ENCODE measurements at regions of chrX and their contacts with region 1.

Region 1: GRCh38 chrX:20442597-20442996 is 175.9 kb upstream of the RPS6KA3 start:
- DNase-seq: peak; percentile 76
- ATAC-seq: peak; percentile 88
- H3K4me3 ChIP-seq: no peak overlapping the region
- H3K27ac ChIP-seq: peak overlapping the region; percentile 46
- H3K4me1 ChIP-seq: peaks cover 63% of the 10 kb centered on the region
- H3K27me3 ChIP-seq: no peaks in the 10 kb centered on the region
- CTCF ChIP-seq: peak; percentile 72
- EP300 ChIP-seq: peak in 1 of 2 experiments; percentile 61; a peak in 2 of 4 replicates
- POLR2A ChIP-seq: no peak
- RAD21 ChIP-seq: peak; percentile 83

Region 2: GRCh38 chrX:20116579-20117240 is 325.9 kb before region 1 on chrX and contains the start of gene MAP7D2:
- CTCF ChIA-PET with region 1: no interaction called
- POLR2A ChIA-PET with region 1: no interaction called
- in situ Hi-C with region 1: no loop called
- intact Hi-C with region 1: no loop called
- DNase-seq: peak; percentile 2
- ATAC-seq: peak; percentile 78
- H3K4me3 ChIP-seq: peak within 1 kb of the TSS; percentile 50 to 71 (median 64); a peak in 5 of 6 replicates
- H3K27ac ChIP-seq: no peak within 1 kb of the TSS
- H3K4me1 ChIP-seq: peaks cover 35% of the 10 kb centered on the region
- H3K27me3 ChIP-seq: no peaks in the 10 kb centered on the region
- CTCF ChIP-seq: no peak
- EP300 ChIP-seq: no peak
- POLR2A ChIP-seq: no peak
- RAD21 ChIP-seq: no peak
- total RNA-seq, gene MAP7D2: 10.5 and 14.2 TPM in 2 replicates

Region 3: GRCh38 chrX:20300822-20301221 is 141.8 kb before region 1 on chrX:
- CTCF ChIA-PET with region 1: no interaction called
- POLR2A ChIA-PET with region 1: no interaction called
- in situ Hi-C with region 1: no loop called
- intact Hi-C with region 1: no loop called
- DNase-seq: no peak
- ATAC-seq: peak; percentile 65
- H3K4me3 ChIP-seq: no peak overlapping the region
- H3K27ac ChIP-seq: no peak overlapping the region
- H3K4me1 ChIP-seq: peaks cover 4% of the 10 kb centered on the region
- H3K27me3 ChIP-seq: no peaks in the 10 kb centered on the region
- CTCF ChIP-seq: no peak
- EP300 ChIP-seq: no peak
- POLR2A ChIP-seq: no peak
- RAD21 ChIP-seq: no peak

Region 4: DNA sequence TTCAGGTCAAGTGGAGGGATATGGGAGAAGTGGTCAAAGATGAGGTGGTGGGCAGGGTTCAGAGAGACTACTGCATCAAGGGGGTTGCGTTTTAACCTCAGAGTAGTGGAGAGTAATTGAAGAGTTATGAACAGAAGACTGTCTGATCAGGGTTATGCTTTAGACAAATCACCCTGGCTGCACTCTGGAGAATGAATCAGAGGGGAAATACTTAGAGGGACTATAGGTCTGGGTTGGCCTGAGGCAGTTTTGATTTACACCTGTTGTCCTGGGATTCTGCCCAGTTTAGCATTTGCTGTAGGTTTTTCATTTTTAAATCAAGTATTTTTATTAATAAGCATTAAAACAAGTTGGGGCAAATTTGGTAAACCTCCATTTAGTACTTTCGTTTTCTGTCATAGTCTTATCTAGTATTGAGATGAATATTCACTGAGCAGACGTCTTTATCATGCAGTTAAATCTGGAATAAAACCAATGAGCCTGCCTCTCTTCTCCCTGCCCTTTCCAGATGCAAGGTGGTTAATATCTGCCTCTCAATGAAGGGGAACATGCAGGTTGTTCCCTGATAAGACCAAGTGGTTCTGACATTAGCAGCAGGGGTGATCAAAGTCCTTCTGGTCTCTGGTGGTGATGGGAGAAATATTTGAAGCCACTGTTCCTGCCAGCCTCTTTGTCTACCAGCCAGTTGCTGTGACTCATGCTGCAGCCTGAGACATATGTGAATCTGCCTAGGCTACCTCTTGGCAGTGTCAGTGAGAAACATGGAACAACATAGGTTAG is 59.9 kb before region 1 on chrX:
- CTCF ChIA-PET with region 1: no interaction called
- POLR2A ChIA-PET with region 1: no interaction called
- in situ Hi-C with region 1: no loop called
- intact Hi-C with region 1: loop called (anchors 5 kb)
- DNase-seq: peak; percentile 84
- ATAC-seq: peak; percentile 92
- H3K4me3 ChIP-seq: peak overlapping the region in 2 of 3 experiments; percentile 19 to 31; a peak in 2 of 6 replicates
- H3K27ac ChIP-seq: peak overlapping the region; percentile 73
- H3K4me1 ChIP-seq: peaks cover 59% of the 10 kb centered on the region
- H3K27me3 ChIP-seq: no peaks in the 10 kb centered on the region
- CTCF ChIP-seq: no peak
- EP300 ChIP-seq: no peak
- POLR2A ChIP-seq: no peak
- RAD21 ChIP-seq: no peak

Region 5: GRCh38 chrX:20515841-20516461 is 73.4 kb after region 1 on chrX:
- CTCF ChIA-PET with region 1: no interaction called
- POLR2A ChIA-PET with region 1: no interaction called
- in situ Hi-C with region 1: no loop called
- intact Hi-C with region 1: no loop called
- DNase-seq: peak; percentile 23
- ATAC-seq: no peak
- H3K4me3 ChIP-seq: no peak overlapping the region
- H3K27ac ChIP-seq: no peak overlapping the region
- H3K4me1 ChIP-seq: peaks cover 10% of the 10 kb centered on the region; the same call in 1 of the 2 replicates
- H3K27me3 ChIP-seq: no peaks in the 10 kb centered on the region
- CTCF ChIP-seq: no peak
- EP300 ChIP-seq: no peak
- POLR2A ChIP-seq: no peak
- RAD21 ChIP-seq: no peak

Measured in HepG2 (cell line).